ENCODE measurements at regions of chr4 and their contacts with region 1.

Region 1: DNA sequence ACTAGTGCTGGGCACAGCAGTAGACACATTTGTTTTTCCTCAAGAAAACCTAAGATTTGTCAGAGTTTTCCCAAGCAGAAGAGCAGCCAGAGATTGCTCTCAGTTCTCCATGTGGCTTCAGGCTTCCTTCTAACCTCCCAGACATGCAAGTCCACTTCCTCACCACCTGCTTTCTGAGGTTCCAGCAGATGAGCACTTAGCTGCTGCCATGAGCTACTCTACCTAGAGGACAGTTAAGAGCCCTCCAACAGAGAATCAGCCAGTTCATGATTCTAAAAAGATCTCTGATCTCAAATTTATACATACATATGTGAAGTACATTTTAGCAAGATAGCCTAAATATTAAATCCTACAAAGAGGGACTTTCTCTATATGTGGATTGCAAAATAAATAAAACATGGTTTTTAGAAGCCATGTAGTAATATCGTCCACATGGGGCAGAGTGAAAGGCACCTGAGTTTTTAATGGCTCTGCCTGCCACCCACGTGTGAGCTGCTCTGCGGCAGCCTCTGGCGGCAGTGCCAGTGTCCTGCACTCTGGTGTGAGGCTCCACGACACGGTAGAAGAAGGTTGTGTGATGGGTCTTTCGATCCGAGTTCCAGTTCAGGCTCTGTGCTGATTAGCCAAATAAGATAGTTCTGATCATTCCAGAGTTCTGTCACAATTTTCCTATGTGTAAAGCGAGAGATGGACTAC is 10.3 kb downstream of the CYP4V2 start:
- DNase-seq: peak; percentile 66
- ATAC-seq: peak; percentile 90
- H3K4me3 ChIP-seq: no peak overlapping the region
- H3K27ac ChIP-seq: no peak overlapping the region
- H3K4me1 ChIP-seq: peaks cover 0 to 17% of the 10 kb centered on the region in 2 experiments; a peak in 2 of 4 replicates
- H3K27me3 ChIP-seq: no peaks in the 10 kb centered on the region
- CTCF ChIP-seq: peak; percentile 90 to 98 (median 95)
- POLR2A ChIP-seq: no peak
- RAD21 ChIP-seq: peak; percentile 67

Region 2: DNA sequence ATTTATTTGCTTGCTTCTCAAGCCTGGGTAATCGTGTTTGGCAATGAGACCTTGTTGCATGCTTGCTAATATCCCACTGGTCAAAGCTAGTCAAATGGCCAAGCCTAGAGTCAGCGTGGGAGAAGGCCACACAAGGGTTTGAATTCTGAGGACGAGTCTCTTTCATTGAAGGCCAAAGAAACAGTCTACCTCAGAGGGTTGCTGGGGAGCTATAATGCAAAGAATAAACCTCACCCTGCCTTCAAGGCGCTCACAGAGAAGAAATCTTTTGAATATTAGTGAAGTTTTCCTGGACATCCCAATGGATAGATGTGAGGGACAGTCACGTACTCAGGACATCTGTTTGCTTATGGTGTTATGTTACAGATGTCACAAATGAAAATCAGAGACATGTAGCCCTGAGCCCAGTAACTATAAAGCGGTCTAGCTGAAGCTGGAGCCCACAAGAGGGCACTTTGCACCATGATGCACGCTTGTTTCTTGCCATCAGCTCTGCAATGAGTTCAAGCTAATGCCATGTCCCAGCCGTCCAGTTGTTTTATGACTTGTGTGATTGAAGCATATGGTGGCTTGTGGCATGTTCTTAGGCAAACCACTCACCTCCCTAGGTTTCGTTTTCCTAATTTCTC is 133.8 kb before region 1 on chr4:
- CTCF ChIA-PET with region 1: interaction called, 11 read pairs
- POLR2A ChIA-PET with region 1: no interaction called
- RAD21 ChIA-PET with region 1: no interaction called
- intact Hi-C with region 1: loop called (anchors 2 kb)
- DNase-seq: peak; percentile 64
- ATAC-seq: peak; percentile 93
- H3K4me3 ChIP-seq: peak overlapping the region; percentile 39 to 53
- H3K27ac ChIP-seq: no peak overlapping the region
- H3K4me1 ChIP-seq: peaks cover 0 to 18% of the 10 kb centered on the region in 2 experiments; a peak in 3 of 4 replicates
- H3K27me3 ChIP-seq: no peaks in the 10 kb centered on the region
- CTCF ChIP-seq: peak; percentile 58 to 78 (median 60); a peak in 5 of 6 replicates
- POLR2A ChIP-seq: no peak
- RAD21 ChIP-seq: peak; percentile 84

Measured in HCT116 (cell line).